ENCODE measurements at regions of chr19 and their contacts with region 1.

Region 1: GRCh38 chr19:39390755-39391592 is at the starts of genes MED29 and PAF1:
- DNase-seq: peak; percentile 94 to 99
- H3K4me3 ChIP-seq: peak within 1 kb of the TSS; percentile 78 to 93
- H3K27ac ChIP-seq: peak within 1 kb of the TSS; percentile 98 to 100
- H3K4me1 ChIP-seq: peaks cover 8 to 21% of the 10 kb centered on the region in 2 donors
- H3K27me3 ChIP-seq: no peaks in the 10 kb centered on the region
- CTCF ChIP-seq: peak in 1 of 3 experiments; percentile 8
- total RNA-seq, gene MED29: 60.8 TPM
- total RNA-seq, gene PAF1: 12.7 TPM

Region 2: DNA sequence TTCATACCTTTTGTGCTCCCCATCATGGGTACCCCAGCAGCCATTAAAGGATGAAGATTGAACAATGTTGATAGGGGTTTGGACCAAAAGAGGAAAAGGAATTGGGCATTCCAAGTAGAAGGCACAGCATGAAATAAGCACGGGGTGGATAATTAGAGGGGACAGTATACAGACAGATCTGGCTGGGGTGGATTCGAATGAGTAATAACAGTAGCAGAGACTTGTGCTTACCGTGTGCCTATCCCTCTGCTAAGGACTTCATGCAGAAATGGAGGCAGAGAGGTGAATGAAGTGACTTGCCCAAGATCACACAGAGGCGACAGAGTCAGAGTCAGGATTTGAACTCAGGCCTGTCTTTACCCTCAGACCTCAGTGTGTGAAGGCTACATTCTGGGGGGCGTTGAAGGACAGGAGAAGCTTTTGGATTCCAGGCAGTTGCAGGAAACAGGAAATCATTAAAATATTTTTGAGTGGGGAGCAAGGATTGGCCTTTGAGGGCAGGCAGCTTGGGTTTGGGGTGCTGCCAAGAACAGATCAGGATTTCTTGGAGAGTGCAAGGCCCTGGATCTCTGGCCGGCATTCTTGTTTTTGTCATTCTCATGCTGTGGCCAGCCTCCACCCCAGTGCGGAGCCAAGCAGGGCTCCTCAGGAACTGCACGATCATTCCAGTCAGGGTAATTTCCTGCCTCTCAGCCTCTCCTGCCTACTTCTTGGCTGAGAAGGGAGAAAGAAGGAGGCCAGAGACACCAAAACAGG is 18.7 kb before region 1 on chr19:
- intact Hi-C with region 1: loop called (anchors 1 kb)
- DNase-seq: peak; percentile 41 to 93
- H3K4me3 ChIP-seq: peak overlapping the region; percentile 20 to 33
- H3K27ac ChIP-seq: peak overlapping the region; percentile 96
- H3K4me1 ChIP-seq: peaks cover 15 to 24% of the 10 kb centered on the region in 2 donors
- H3K27me3 ChIP-seq: no peaks in the 10 kb centered on the region
- CTCF ChIP-seq: no peak

Region 3: GRCh38 chr19:39435499-39436349 is 44.8 kb after region 1 on chr19 and contains the start of gene RPS16:
- intact Hi-C with region 1: loop called (anchors 1 kb)
- DNase-seq: peak; percentile 92 to 99
- H3K4me3 ChIP-seq: peak within 1 kb of the TSS; percentile 72 to 82
- H3K27ac ChIP-seq: peak within 1 kb of the TSS; percentile 72 to 85
- H3K4me1 ChIP-seq: peaks cover 10 to 23% of the 10 kb centered on the region in 2 donors
- H3K27me3 ChIP-seq: no peaks in the 10 kb centered on the region
- CTCF ChIP-seq: no peak
- total RNA-seq, gene RPS16: 1,453 TPM